ENCODE measurements at regions of chr3 and their contacts with region 1.

Region 1: DNA sequence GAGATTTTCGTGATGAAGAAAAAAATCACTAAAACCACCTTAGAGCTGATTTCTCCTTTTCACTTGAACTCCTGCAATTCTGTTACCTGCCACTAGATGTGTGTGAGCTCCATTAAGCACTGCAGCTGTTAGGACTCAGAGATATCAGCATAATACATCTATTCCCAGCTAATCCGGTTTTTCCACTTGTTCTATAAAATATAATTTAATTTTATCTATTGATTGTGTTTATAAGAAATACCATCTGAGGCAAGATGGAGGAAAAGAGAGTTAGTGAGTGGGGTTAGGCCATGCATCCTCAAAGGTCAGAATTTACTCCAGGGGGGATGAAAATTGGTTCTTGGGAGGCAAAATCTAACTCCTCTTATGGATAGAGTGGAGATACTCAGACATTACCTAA is 152.7 kb downstream of the IL20RB start:
- DNase-seq: no peak
- ATAC-seq: no peak
- H3K4me3 Mint-ChIP-seq: no peak overlapping the region
- H3K27ac Mint-ChIP-seq: no peak overlapping the region
- H3K4me1 Mint-ChIP-seq: no peaks in the 10 kb centered on the region
- H3K27me3 Mint-ChIP-seq: peaks cover 8% of the 10 kb centered on the region
- CTCF ChIP-seq: peak; percentile 76

Region 2: GRCh38 chr3:136804813-136805212 is 305.7 kb before region 1 on chr3:
- CTCF ChIA-PET with region 1: no interaction called
- POLR2A ChIA-PET with region 1: no interaction called
- intact Hi-C with region 1: no loop called
- DNase-seq: no peak
- ATAC-seq: no peak
- H3K4me3 Mint-ChIP-seq: no peak overlapping the region
- H3K27ac Mint-ChIP-seq: no peak overlapping the region
- H3K4me1 Mint-ChIP-seq: no peaks in the 10 kb centered on the region
- H3K27me3 Mint-ChIP-seq: no peaks in the 10 kb centered on the region
- CTCF ChIP-seq: no peak

Region 3: GRCh38 chr3:137099364-137100219 is 10.9 kb before region 1 on chr3:
- CTCF ChIA-PET with region 1: interaction called, 27 read pairs
- POLR2A ChIA-PET with region 1: no interaction called
- intact Hi-C with region 1: no loop called
- DNase-seq: no peak
- ATAC-seq: no peak
- H3K4me3 Mint-ChIP-seq: no peak overlapping the region
- H3K27ac Mint-ChIP-seq: no peak overlapping the region
- H3K4me1 Mint-ChIP-seq: no peaks in the 10 kb centered on the region
- H3K27me3 Mint-ChIP-seq: peaks cover 6% of the 10 kb centered on the region
- CTCF ChIP-seq: no peak

Region 4: GRCh38 chr3:137121704-137122314 is 11.3 kb after region 1 on chr3:
- CTCF ChIA-PET with region 1: interaction called, 17 read pairs
- POLR2A ChIA-PET with region 1: no interaction called
- intact Hi-C with region 1: no loop called
- DNase-seq: peak; percentile 33
- ATAC-seq: no peak
- H3K4me3 Mint-ChIP-seq: no peak overlapping the region
- H3K27ac Mint-ChIP-seq: no peak overlapping the region
- H3K4me1 Mint-ChIP-seq: no peaks in the 10 kb centered on the region
- H3K27me3 Mint-ChIP-seq: peaks cover 7% of the 10 kb centered on the region
- CTCF ChIP-seq: peak; percentile 54

Region 5: DNA sequence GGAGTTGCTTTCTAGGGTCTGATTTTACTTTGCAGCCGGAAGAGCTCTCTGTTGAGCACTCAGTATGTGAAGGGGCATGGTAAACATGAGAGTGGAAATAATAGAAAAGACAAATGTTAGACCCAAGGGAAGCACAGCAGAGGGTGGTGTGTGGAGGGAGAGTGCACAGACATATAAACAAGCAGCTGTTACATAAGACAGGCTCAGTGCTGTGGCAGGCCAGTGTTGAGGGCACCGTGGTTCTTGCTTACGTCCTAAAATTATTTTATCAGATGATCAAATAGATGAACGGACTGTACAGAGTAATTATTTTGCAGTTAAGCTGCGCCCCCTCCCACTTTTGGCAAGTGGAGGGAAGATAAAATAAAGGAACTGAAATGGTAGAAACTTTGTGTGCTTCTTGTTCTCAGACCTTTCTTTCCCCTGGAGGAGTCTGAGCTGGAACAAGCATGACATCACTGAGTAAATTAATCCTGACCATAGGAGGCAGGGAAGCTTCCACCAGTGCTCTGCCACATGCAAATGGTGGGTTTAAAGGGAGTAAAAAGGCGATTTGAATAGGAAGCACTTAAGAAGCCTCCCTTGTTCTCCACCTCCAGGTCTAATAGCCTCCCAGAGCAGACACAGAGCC is 52.9 kb after region 1 on chr3:
- CTCF ChIA-PET with region 1: no interaction called
- POLR2A ChIA-PET with region 1: no interaction called
- intact Hi-C with region 1: no loop called
- DNase-seq: no peak
- ATAC-seq: no peak
- H3K4me3 Mint-ChIP-seq: no peak overlapping the region
- H3K27ac Mint-ChIP-seq: no peak overlapping the region
- H3K4me1 Mint-ChIP-seq: no peaks in the 10 kb centered on the region
- H3K27me3 Mint-ChIP-seq: peaks cover 2% of the 10 kb centered on the region
- CTCF ChIP-seq: no peak

Region 6: DNA sequence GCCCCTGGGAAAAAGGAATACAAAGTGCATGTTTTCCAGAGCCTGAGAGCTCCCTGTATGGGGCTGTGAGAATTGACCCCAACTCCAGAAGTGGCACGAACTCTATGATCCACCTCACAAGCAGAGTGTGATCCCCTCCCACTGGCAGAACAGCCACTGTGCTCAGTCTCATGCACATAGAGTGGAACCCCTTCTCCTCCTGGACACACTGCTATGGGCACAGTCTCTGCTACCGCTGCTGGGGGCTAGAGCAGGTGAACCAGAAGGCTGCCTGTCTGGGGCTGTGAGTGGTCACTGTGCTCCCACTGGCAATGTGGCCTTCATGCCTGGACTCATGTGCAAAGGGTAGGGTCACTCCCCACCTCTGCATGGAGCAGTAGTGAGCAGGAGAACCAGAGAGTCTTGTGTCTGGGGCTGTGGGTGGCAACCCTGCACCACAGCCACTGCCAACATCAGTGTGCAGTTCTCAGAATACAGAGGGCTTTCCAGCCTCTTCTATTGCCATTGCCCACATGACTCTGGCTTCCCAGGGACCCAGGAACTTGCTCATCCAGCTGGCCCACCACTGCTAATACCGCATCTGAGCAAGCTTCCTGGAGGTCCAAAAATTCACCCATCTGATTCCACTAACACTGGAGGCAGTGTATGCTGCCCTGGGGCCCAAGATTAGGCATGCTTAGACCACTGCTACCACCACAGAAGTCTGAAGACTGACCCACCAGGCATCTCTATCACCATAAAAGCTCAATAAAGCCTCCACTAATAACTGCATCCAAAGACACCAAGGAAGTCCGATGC is 309.9 kb after region 1 on chr3:
- CTCF ChIA-PET with region 1: no interaction called
- POLR2A ChIA-PET with region 1: no interaction called
- intact Hi-C with region 1: no loop called
- DNase-seq: no peak
- ATAC-seq: no peak
- H3K4me3 Mint-ChIP-seq: no peak overlapping the region
- H3K27ac Mint-ChIP-seq: no peak overlapping the region
- H3K4me1 Mint-ChIP-seq: no peaks in the 10 kb centered on the region
- H3K27me3 Mint-ChIP-seq: no peaks in the 10 kb centered on the region
- CTCF ChIP-seq: no peak

Region 7: DNA sequence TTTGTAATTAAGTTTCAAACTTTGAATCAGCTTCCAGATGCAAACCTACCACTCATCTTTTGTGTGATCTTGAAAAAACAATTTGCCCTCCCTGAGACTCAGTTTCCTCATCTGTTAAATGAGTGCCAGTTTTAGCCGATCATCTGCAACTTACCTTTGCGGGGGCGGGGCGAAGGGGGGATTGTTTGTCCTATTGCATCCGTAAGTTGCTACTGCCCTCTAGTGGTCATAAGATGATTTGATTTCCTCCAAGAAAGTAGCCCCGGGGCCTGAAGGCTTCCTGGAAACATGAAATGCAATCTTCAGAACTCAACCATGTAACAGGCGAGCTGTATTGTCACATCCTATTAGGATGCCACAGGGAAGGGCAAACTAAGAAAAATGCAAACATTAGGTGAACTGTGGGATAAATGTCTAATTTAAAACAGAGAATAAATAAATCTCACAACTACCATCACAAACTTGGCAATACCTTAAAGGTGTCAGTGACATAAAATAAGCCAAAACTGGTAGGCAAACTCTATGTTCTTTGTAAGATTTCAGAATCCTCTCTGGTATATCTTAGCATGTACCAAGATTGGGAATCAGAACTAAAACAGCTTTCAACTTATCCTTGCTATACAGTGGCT is 836.0 kb after region 1 on chr3:
- CTCF ChIA-PET with region 1: interaction called, 14 read pairs
- POLR2A ChIA-PET with region 1: no interaction called
- intact Hi-C with region 1: loop called (anchors 5 kb)
- DNase-seq: peak; percentile 73
- ATAC-seq: peak; percentile 42
- H3K4me3 Mint-ChIP-seq: no peak overlapping the region
- H3K27ac Mint-ChIP-seq: no peak overlapping the region
- H3K4me1 Mint-ChIP-seq: no peaks in the 10 kb centered on the region
- H3K27me3 Mint-ChIP-seq: no peaks in the 10 kb centered on the region
- CTCF ChIP-seq: peak; percentile 82

Measured in activated CD8-positive, alpha-beta T cell treated with anti-CD3 and anti-CD28 coated beads for 36 hours (primary cell).